Mammary epithelial cell (primary cell): ENCODE measurements at regions of chr22 and their contacts with region 1.

Region 1: DNA sequence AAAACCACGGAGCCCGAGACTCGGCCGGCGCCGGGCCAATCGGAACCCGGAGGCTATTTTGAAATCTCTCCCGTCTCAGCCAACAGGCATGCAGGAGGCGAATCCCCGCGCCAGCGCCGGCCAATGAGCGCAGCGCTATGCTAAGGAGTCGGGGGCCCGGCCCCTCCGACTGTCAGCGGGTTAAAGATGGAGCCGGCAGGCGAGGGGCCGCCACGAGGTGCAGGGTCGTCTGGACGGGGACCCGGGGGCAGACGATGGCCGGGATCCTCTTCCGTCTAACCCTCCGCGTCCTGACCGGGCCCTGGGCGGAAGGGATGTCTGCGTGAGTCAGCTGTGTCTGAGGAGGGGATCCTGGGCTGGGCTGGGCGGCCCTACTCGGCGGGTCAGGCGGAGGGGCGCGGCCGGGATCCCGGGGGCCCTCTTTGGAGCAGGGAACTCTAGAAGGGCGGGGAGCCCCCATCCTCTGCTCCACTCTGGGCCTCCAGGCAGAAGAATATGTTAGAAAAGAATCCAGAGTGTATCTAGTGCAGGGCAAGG is 10.0 kb downstream of the SDF2L1 start:
- DNase-seq: peak; percentile 85
- H3K4me3 ChIP-seq: peak overlapping the region; percentile 77 to 97 (median 89)
- H3K27ac ChIP-seq: peak overlapping the region; percentile 32
- H3K4me1 ChIP-seq: peaks cover 14% of the 10 kb centered on the region
- H3K27me3 ChIP-seq: no peaks in the 10 kb centered on the region
- CTCF ChIP-seq: no peak

Region 2: DNA sequence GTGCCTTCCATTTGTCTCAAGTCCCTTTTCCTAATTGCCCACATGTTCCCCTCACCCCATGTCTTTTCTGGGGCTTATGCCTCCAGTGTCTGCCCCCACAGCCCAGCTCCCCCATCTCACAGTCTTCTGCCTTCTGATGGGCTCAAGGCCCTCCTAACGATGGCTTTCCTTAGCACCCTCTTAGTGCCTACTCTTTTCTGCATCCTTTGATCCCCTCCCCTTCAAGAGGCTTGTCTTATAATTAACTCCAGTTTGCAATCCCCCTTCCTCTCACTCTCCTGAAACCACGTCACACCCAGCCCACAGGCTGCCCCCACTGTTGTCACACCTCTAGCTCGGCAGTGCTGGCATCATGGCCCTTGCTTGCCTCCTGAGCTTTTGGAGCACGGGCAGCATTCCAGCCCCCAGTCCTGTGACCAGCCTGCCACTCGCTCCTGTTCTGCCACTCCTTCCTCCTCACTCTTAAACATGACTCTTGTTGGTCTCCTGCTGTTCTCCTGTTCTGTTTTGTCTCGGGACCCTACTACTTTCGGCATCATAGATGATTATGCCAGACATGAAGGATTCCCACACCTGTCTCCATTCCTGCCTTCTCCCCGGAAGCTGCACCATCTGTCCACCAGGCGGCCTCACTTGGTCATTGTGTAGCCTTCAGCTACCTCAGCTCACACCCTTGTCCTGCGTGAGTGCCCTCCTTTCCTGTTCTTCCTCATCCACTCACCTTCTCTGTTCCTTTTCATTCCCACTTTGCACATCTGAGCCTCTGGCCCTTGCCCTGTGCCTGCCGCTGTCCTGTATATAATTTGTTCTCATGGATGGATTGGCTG is 58.5 kb before region 1 on chr22:
- CTCF ChIA-PET with region 1: no interaction called
- dilution Hi-C with region 1: loop called (anchors 5 kb)
- in situ Hi-C with region 1: no loop called
- intact Hi-C with region 1: loop called (anchors 10 kb)
- DNase-seq: no peak
- H3K4me3 ChIP-seq: no peak overlapping the region
- H3K27ac ChIP-seq: no peak overlapping the region
- H3K4me1 ChIP-seq: peaks cover 15% of the 10 kb centered on the region
- H3K27me3 ChIP-seq: no peaks in the 10 kb centered on the region
- CTCF ChIP-seq: peak; percentile 45 to 55

Region 3: DNA sequence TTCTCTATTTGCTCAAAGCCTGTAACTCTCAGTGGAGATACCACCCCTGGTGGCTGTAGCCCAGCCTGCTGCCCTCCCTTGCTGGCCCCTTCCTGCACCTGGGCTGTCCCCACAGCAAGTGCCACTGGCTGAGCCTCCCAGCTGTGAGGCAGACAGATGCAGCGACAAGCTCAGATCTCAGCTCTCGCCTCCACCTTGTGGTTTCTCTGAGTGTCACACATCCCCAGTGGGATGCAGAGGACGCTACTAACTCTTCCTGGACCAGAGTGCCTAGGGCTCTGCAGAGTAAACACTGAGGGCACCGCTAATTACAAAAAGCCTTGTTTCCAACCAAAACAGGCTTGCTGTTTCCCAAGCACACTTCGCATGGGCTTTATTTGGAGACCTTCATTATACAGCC is 74.6 kb after region 1 on chr22:
- CTCF ChIA-PET with region 1: no interaction called
- dilution Hi-C with region 1: no loop called
- in situ Hi-C with region 1: no loop called
- intact Hi-C with region 1: no loop called
- DNase-seq: no peak
- H3K4me3 ChIP-seq: no peak overlapping the region
- H3K27ac ChIP-seq: no peak overlapping the region
- H3K4me1 ChIP-seq: no peaks in the 10 kb centered on the region
- H3K27me3 ChIP-seq: no peaks in the 10 kb centered on the region
- CTCF ChIP-seq: peak in 1 of 2 donors; percentile 13